Activated CD4-positive, alpha-beta T cell treated with anti-CD3 and anti-CD28 coated beads for 36 hours (primary cell): ENCODE measurements at regions of chr2 and their contacts with region 1.

Region 1: GRCh38 chr2:197011799-197012641 is 85.5 kb upstream of the PGAP1 start:
- DNase-seq: peak; percentile 36
- ATAC-seq: peak; percentile 74
- H3K4me3 Mint-ChIP-seq: no peak overlapping the region
- H3K27ac Mint-ChIP-seq: peak overlapping the region; percentile 80
- H3K4me1 Mint-ChIP-seq: no peaks in the 10 kb centered on the region
- H3K27me3 Mint-ChIP-seq: no peaks in the 10 kb centered on the region

Region 2: DNA sequence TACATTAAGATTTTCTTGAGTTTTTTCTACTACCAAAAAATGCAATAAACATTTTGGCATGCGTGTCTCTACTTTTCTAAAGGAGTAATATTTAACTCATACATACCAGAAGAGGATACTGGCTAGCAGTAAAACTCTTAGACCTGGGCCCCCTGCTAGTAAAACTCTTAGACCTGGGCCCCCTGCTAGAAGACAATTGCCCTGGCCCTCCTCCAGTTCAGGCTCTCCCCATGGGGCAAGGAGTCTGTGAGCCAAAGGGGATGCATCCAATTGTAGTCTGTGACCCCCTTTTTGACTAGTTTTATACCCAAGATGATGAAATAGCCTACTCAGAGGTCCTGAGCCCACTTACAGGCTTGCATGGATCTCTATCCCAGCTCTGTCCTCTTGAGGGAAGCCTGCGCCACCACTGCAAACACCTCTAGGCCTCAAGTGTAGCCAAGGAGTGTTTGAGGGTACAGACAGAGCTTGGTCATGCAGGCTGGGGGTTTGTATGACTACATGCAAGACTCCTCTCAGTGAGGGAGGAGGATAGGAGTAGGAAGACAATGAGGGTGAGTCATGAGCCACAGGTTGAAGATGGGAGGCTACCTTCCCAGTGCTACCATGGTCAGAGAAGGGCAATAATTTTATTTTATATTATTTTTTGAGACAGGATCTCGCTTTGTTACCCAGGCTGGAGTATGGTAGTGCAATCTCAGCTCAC is 40.3 kb before region 1 on chr2:
- CTCF ChIA-PET with region 1: no interaction called
- POLR2A ChIA-PET with region 1: no interaction called
- intact Hi-C with region 1: loop called in 1 of 2 experiments (anchors 1 kb)
- DNase-seq: peak; percentile 41
- ATAC-seq: peak; percentile 93
- H3K4me3 Mint-ChIP-seq: no peak overlapping the region
- H3K27ac Mint-ChIP-seq: no peak overlapping the region
- H3K4me1 Mint-ChIP-seq: peaks cover 17% of the 10 kb centered on the region
- H3K27me3 Mint-ChIP-seq: no peaks in the 10 kb centered on the region

Region 3: DNA sequence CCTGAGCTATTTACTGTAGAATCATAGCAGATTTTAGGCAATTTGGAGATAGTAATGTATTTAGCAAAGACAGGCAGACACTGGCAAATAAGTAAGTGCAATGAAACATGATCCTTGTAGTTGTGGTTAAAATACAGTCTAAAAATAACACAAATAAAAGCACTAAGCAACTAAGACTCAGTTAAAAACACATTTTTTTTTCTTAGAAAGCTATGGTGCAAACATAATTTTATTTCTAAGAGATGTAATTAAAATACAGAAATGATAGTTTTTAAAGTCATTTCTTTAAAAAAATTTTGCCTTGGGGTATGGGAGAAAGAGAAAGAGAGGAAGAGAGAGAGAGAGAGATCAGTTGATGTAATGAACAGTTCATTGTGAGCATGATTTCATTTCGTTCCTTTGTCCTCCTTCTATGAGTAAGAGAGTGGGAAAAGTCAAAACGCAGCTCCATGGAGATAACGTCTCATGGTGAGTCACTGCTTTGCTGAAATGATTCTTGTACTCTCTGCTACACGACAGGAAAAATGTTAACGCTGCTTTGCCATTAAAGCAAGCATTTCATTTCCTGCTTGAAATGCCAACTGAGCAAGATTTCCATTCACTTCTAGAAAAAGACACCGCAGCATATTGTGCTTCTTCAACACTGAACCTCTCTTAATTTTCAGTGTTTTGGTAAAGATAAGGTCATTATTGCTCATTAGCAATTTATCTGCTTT is 24.2 kb before region 1 on chr2:
- CTCF ChIA-PET with region 1: interaction called, 16 read pairs
- POLR2A ChIA-PET with region 1: no interaction called
- intact Hi-C with region 1: no loop called
- DNase-seq: peak; percentile 62
- ATAC-seq: peak; percentile 93
- H3K4me3 Mint-ChIP-seq: peak overlapping the region; percentile 38
- H3K27ac Mint-ChIP-seq: peak overlapping the region; percentile 98
- H3K4me1 Mint-ChIP-seq: peaks cover 65% of the 10 kb centered on the region
- H3K27me3 Mint-ChIP-seq: no peaks in the 10 kb centered on the region

Region 4: DNA sequence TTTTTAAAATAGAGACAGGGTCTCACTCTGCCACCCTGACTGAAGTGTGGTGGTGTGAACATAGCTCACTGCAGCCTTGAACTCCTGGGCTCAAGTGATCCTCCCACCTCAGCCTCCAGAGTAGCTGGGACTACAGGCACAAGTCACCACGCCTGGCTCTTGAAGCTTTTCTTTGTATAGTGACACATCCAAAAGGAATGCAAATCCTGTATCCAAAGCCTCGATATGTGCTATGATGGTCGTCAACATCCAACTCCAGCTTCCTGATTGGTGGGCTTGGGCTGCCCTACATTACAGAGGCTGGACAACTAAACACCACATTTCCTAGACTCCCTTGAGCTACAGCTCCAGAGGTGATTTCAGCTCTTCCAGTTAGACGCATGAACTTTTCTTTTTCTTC is 16.2 kb after region 1 on chr2:
- CTCF ChIA-PET with region 1: interaction called, 10 read pairs
- POLR2A ChIA-PET with region 1: no interaction called
- intact Hi-C with region 1: no loop called
- DNase-seq: no peak
- ATAC-seq: no peak
- H3K4me3 Mint-ChIP-seq: no peak overlapping the region
- H3K27ac Mint-ChIP-seq: peak overlapping the region; percentile 64
- H3K4me1 Mint-ChIP-seq: peaks cover 13% of the 10 kb centered on the region
- H3K27me3 Mint-ChIP-seq: no peaks in the 10 kb centered on the region

Region 5: DNA sequence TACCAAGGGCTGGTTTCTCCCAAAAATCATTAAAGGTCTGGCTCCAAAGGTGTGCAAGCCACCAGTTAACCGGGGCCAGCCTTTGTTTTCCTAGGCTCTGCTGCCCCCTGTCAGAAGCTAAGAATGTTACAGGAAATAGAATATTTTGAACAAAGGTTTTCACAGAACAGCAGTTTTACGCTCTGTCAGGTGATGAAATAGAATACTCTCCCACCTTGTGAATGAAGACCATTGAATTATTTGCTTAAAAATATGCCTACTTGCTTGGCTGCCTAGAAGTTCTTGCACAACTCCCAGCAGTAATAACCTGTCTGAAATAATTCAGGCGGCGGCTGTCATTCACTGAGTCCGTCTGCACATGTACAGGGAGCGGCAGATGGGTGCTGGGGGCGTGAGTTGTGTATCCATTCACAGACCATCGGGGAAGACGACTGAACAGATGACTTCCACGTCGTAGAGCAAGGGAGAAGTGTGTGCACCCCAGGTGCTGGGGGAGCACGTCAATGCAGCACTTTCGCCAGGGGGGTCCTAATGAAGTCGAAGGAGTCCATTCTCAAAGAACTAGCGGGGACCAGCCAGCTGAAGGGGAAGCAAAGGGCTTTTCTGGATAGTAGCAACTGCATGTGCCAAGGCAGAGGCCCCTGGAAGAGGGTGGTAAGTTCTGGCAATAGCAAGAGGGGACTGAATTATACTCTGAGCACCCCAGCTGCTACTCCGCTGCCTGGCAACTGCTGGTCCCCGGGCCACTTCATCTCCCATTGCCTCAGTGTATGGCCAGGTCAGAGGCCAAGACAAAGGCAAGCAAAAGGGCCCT is 366.7 kb after region 1 on chr2:
- CTCF ChIA-PET with region 1: interaction called, 7 read pairs
- POLR2A ChIA-PET with region 1: no interaction called
- intact Hi-C with region 1: loop called (anchors 1 to 2 kb)
- DNase-seq: peak; percentile 80
- ATAC-seq: peak; percentile 83
- H3K4me3 Mint-ChIP-seq: no peak overlapping the region
- H3K27ac Mint-ChIP-seq: no peak overlapping the region
- H3K4me1 Mint-ChIP-seq: peaks cover 19% of the 10 kb centered on the region
- H3K27me3 Mint-ChIP-seq: no peaks in the 10 kb centered on the region

Region 6: DNA sequence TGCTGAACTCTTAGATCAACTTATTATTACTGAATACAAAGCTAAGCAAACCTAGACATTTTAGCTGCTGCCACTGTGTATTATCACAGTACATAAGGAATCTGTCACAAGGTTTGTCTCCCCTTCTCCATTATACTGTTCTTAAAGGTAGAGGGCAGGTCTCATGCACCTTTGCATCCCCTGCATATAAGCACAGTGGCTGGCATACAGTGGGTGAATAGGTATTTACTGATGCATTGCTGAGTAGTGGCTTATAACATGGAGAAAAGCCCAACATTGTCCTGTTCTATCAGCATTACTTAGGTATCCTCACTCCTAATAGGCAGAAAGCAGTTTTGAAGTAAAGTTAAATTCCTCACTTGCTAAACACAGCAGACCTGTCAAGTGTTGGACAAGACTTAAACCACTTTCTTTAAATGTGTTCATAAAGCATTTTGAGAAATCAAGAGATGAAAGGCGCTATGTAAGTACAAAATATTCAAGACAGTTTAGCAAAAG is 379.2 kb after region 1 on chr2:
- CTCF ChIA-PET with region 1: interaction called, 3 read pairs
- POLR2A ChIA-PET with region 1: no interaction called
- intact Hi-C with region 1: loop called in 1 of 2 experiments (anchors 5 kb)
- DNase-seq: no peak
- ATAC-seq: no peak
- H3K4me3 Mint-ChIP-seq: no peak overlapping the region
- H3K27ac Mint-ChIP-seq: no peak overlapping the region
- H3K4me1 Mint-ChIP-seq: no peaks in the 10 kb centered on the region
- H3K27me3 Mint-ChIP-seq: no peaks in the 10 kb centered on the region

Region 7: DNA sequence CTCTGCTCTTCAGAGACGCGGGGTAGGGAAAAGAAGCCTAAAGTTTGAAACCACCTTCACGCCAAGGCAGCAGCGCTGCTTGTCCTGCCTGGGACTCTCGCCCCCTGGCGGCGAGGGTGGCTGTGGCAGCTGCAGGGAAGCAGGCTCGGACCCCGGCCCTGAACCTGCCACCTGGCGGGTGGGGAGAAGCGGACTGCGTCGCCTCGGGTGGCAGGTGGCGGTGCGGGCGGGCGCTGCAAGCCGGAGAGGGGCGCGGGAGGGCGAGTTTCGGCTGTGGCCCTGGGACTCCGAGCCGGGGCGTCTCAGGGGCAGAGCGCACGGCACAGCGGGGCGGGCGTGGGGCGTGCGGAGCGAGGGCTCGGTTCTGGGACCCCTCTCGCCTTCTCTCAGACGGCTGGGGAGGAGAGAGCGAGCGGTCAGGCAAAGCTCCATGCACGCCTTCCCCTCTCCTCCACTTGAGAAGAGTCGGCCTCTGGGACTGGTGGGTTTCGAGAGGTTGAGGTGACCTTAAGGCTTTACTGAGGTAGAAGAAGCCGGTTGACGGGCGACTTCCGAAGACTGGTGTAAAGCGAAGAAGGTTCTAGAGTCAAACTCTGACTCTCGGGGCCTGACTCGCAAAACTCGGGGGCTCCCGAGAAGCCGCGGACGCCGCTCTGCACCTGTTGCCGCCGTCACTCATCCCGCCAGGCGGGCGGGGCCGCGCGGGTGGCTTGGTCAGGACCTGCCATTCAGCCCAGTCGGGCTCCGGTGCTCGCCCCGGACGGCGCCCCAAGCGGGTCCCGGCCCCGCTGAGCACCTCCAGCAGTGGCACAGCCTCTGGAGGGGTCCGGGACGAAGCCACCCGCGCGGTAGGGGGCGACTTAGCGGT is 774.2 kb after region 1 on chr2:
- CTCF ChIA-PET with region 1: no interaction called
- POLR2A ChIA-PET with region 1: no interaction called
- intact Hi-C with region 1: loop called in 1 of 2 experiments (anchors 10 kb)
- DNase-seq: peak; percentile 87
- ATAC-seq: peak; percentile 82
- H3K4me3 Mint-ChIP-seq: peak overlapping the region; percentile 67
- H3K27ac Mint-ChIP-seq: no peak overlapping the region
- H3K4me1 Mint-ChIP-seq: peaks cover 2% of the 10 kb centered on the region
- H3K27me3 Mint-ChIP-seq: peaks cover 17% of the 10 kb centered on the region